GM12878 (cell line): ENCODE measurements at regions of chr10 and their contacts with region 1.

Region 1: DNA sequence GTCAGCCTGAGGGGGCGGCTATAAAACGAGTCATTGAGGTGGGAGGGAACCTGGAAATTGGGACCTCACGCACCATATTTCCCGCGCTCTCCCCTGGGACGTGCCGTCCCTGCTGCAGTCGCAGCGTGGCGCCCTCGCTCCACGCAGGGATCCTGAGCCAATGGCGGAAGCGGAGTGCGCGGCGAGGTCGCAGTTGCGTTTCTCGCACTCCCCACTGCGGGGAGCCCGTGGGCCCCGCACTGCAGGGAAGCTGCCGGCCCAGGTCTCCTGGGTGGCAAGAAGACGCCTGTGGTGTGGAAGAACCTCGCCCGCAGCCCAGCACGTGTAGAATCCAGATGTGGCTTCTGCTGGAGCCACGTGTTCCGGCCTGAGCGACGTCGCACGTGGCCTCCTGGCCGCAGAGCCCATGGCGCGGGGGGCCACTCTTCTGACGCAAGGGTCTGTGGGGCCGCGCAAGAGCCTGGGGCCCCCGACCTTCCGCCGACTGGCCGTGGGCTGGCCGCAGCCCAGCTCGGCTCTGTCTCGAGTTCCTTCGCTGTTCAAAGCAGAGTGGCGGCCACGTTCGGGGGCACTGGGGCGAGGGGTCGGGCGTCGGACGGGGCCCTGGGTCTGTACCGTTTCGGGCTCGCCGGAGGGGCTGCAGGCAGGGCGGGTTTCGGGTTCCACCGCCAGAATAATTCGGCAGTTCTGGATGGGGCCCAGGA is 26.4 kb downstream of the HIF1AN start:
- DNase-seq: peak; percentile 16
- ATAC-seq: peak; percentile 95
- H3K4me3 ChIP-seq: no peak overlapping the region
- H3K27ac ChIP-seq: no peak overlapping the region
- H3K4me1 ChIP-seq: no peaks in the 10 kb centered on the region
- H3K27me3 ChIP-seq: peaks cover 0 to under 1% of the 10 kb centered on the region in 2 experiments; a peak in 1 of 4 replicates
- CTCF ChIP-seq: peak; percentile 89 to 95 (median 92)
- EP300 ChIP-seq: no peak
- POLR2A ChIP-seq: no peak; the same call in 1 of the 2 replicates
- RAD21 ChIP-seq: peak; percentile 93

Region 2: GRCh38 chr10:100743626-100744135 is 181.5 kb after region 1 on chr10:
- CTCF ChIA-PET with region 1: interaction called, 13 read pairs
- POLR2A ChIA-PET with region 1: no interaction called
- RAD21 ChIA-PET with region 1: no interaction called
- SMC1A ChIA-PET with region 1: interaction called, 4 read pairs
- in situ Hi-C with region 1: no loop called
- intact Hi-C with region 1: loop called (anchors 1 kb)
- DNase-seq: no peak
- ATAC-seq: peak; percentile 91
- H3K4me3 ChIP-seq: no peak overlapping the region
- H3K27ac ChIP-seq: no peak overlapping the region
- H3K4me1 ChIP-seq: no peaks in the 10 kb centered on the region
- H3K27me3 ChIP-seq: peaks cover 34 to 44% of the 10 kb centered on the region in 2 experiments
- CTCF ChIP-seq: peak; percentile 81 to 82 (median 81)
- EP300 ChIP-seq: no peak
- POLR2A ChIP-seq: no peak
- RAD21 ChIP-seq: peak; percentile 76